Activated B cell treated with CpG ODN at 0.5 μM for 24 hours (primary cell): ENCODE measurements at regions of chr12 and their contacts with region 1.

Region 1: DNA sequence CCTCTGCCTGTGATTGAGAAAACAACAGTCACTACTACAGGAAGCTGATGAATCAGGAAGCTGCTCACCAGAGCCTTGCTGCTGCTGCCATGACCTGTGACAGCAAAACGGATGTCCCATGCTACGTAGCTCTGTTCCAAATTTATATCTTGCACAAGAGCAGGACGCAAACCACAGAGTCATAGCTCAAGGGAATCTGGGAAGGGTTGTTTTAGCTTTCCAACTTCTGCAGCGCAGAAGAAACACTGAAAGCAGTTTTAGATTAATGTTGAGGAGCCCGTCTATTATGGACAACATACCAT is 1.9 kb upstream of the ANKRD33 start:
- DNase-seq: no peak
- ATAC-seq: peak; percentile 94
- H3K4me3 Mint-ChIP-seq: peak overlapping the region; percentile 51
- H3K27ac Mint-ChIP-seq: peak overlapping the region; percentile 74
- H3K4me1 Mint-ChIP-seq: peaks cover 11% of the 10 kb centered on the region
- H3K27me3 Mint-ChIP-seq: no peaks in the 10 kb centered on the region
- CTCF ChIP-seq: no peak

Region 2: DNA sequence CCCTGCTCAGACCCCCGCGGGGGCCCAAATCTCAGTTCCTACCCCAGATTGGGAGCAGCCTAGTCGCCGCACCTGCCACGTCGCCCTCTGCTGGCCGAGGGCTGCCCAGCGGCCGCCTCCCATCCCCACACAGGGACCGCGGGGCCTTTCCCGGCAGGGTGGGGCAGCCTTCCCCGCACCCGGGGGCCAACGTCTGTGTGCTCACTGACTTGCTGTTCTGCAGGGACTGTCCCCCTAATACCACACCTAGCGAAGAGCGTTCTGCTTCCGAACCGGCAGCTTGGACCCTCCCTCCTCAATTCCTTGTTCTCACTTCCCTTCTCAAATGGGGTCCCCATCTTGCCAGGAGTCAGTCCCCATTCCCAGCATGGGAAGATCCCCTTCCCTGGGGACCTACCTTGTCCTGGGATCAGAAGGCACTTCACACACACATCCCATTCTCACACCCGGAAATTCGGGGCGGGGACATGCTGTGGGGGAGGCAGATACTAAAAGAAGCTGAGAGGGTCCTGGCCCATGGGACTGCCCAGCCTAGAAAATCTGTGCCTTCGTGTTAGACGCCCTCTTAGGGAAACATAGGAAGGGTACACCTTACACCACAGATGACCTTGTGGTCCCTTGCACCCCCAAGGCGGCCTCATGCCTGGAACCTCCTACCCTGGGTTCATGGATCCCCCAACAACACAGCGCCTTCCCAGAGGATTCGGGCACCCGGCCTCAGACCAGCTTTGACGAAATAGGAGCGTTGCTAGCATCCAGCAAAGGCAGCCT is 37.7 kb after region 1 on chr12:
- CTCF ChIA-PET with region 1: no interaction called
- POLR2A ChIA-PET with region 1: no interaction called
- intact Hi-C with region 1: loop called (anchors 5 kb)
- DNase-seq: peak; percentile 44
- ATAC-seq: peak; percentile 66
- H3K4me3 Mint-ChIP-seq: no peak overlapping the region
- H3K27ac Mint-ChIP-seq: no peak overlapping the region
- H3K4me1 Mint-ChIP-seq: peaks cover 32% of the 10 kb centered on the region
- H3K27me3 Mint-ChIP-seq: no peaks in the 10 kb centered on the region
- CTCF ChIP-seq: no peak

Region 3: DNA sequence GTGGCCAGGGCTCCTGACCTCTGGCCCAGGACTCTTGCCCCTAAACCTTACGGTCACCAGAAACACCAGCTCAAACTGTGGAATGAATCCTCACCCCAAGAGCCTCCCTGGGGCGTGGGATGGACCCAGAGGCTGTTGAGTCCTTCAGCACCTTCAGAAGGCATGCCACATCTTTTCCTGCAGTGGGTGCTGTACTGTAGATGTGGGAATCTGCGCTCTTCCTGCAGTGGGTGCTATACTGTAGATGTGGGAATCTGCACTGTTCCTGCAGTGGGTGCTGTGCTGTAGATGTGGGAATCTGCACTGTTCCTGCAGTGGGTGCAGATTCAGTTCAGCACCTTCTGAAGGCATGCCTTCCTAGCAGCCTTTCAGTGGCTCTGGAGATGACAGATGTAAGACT is 519.0 kb after region 1 on chr12:
- CTCF ChIA-PET with region 1: no interaction called
- POLR2A ChIA-PET with region 1: no interaction called
- intact Hi-C with region 1: no loop called
- DNase-seq: no peak
- ATAC-seq: no peak
- H3K4me3 Mint-ChIP-seq: no peak overlapping the region
- H3K27ac Mint-ChIP-seq: no peak overlapping the region
- H3K4me1 Mint-ChIP-seq: no peaks in the 10 kb centered on the region
- H3K27me3 Mint-ChIP-seq: peaks cover 7% of the 10 kb centered on the region
- CTCF ChIP-seq: no peak